IMR-90 (cell line): ENCODE measurements at regions of chr10 and their contacts with region 1.

Region 1: DNA sequence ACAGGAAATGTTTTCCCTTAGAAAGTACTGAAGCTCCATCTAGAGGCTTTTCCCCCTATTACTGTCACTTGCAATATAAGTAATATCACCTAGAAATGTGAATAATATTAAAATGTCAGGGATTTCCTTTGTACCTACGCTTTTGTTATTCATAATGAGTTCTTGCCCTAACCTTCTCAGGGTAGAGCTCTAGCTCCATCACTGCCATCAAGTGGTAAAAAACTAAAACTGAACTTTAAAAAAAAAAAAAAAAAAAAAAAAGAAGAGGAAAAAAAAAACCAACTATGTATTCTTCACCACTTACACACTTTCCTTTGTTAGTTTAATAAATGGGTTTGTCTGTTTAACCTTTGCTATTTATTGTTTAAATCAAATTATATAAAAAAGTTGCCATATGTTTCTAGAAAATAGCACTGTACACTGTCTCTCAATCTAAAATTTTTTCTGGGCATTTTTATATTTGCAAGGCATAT is 49.9 kb downstream of the DNAJC1 start:
- DNase-seq: peak; percentile 61
- ATAC-seq: peak; percentile 14; the same call in 1 of the 2 replicates
- H3K4me3 ChIP-seq: no peak overlapping the region
- H3K27ac ChIP-seq: no peak overlapping the region
- H3K4me1 ChIP-seq: no peaks in the 10 kb centered on the region
- H3K27me3 ChIP-seq: no peaks in the 10 kb centered on the region
- CTCF ChIP-seq: peak; percentile 53
- POLR2A ChIP-seq: no peak
- RAD21 ChIP-seq: peak; percentile 60

Region 2: DNA sequence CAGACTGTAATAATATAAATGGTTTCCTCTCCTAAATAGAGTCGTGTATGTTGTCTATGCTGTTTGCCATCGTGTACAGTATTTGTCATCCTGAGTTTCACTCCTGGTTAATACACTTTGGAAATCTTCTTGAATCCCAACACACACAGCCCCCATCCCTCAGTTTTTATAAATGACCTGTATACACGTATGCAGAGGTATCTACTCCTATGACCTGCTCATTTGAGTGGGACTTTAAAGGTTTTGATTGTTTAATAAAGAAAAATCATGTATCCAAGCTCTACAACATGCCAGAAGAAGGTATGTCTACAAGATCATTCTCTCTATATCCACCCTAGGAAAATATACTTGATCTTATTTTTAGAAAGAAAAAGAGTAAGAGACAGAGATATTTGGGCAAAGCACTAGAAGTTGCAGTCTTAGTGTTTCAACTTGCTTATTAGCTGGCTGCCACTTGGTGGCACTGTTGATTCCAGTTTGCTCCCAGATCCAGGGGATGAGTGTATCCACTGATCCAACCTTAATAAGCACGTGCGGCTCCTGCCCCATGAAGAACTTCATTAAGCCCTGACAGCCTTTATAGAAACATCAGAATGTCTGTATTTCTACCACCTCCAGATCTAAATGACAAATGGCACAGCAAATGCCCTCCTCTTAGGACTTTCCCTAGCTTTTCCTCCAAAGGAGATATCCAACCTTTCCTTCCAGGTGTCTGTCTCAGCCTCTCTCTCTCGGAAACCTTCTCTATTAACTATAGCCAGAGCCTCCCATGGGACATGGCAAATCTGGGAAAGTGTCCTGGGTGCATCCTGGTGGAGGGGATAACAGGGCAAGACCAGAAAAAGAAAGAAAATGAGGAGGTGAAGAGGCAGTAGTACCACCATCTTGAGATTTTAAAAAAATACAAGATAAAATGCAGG is 875.0 kb before region 1 on chr10:
- CTCF ChIA-PET with region 1: no interaction called
- POLR2A ChIA-PET with region 1: no interaction called
- dilution Hi-C with region 1: no loop called
- in situ Hi-C with region 1: loop called (anchors 25 kb)
- intact Hi-C with region 1: loop called (anchors 5 kb)
- DNase-seq: peak; percentile 61
- ATAC-seq: peak; percentile 98
- H3K4me3 ChIP-seq: no peak overlapping the region
- H3K27ac ChIP-seq: no peak overlapping the region
- H3K4me1 ChIP-seq: no peaks in the 10 kb centered on the region
- H3K27me3 ChIP-seq: 0 out of 2 replicates have a peak, but pooled peaks cover 2% of the 10 kb centered on the region
- CTCF ChIP-seq: peak; percentile 73
- POLR2A ChIP-seq: no peak
- RAD21 ChIP-seq: peak; percentile 84

Region 3: GRCh38 chr10:21525367-21526183 is 428.0 kb before region 1 on chr10 and contains the start of gene SKIDA1:
- CTCF ChIA-PET with region 1: no interaction called
- POLR2A ChIA-PET with region 1: no interaction called
- dilution Hi-C with region 1: no loop called
- in situ Hi-C with region 1: no loop called
- intact Hi-C with region 1: loop called (anchors 10 kb)
- DNase-seq: peak; percentile 86
- ATAC-seq: peak; percentile 73
- H3K4me3 ChIP-seq: peak within 1 kb of the TSS; percentile 62
- H3K27ac ChIP-seq: peak within 1 kb of the TSS; percentile 98
- H3K4me1 ChIP-seq: peaks cover 3% of the 10 kb centered on the region; the same call in 1 of the 2 replicates
- H3K27me3 ChIP-seq: no peaks in the 10 kb centered on the region
- CTCF ChIP-seq: no peak
- POLR2A ChIP-seq: no peak
- RAD21 ChIP-seq: no peak
- total RNA-seq, gene SKIDA1: 0.56 and 0.72 TPM in 2 replicates

Region 4: DNA sequence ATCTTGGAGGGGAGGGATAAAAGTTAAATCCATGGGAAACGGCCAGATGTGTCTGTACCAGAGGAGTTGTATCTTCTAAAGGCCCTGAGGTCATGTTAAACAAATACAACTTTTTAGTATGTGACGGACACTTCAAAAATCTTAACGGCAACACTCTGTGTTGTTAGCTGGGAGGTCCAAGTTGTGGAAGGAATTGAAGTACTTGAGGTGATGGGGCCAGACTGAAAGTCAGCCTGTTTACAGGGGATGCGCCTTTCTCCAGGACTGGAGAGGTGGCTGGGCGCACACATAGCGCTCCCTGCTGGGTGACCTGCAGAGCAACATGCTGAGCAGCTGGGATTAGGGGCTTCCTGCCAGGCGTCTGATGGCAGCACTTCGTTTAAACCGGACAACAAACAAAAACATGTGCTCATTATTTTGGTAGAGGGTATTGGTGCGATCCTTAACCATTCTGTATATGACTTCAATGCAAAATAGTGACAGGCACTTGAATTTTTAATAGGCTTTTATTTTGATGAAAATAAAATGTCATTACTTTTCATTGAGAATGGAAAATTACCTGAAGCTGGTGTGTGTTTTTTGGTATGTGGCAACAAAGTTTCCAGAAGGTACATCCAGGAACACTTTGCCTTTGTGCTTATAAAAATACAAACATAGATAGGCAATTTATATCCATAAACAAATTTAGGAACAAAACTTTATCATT is 221.4 kb before region 1 on chr10:
- CTCF ChIA-PET with region 1: interaction called, 4 read pairs
- POLR2A ChIA-PET with region 1: no interaction called
- dilution Hi-C with region 1: no loop called
- in situ Hi-C with region 1: no loop called
- intact Hi-C with region 1: loop called (anchors 5 kb)
- DNase-seq: peak; percentile 82
- ATAC-seq: peak; percentile 95
- H3K4me3 ChIP-seq: no peak overlapping the region
- H3K27ac ChIP-seq: no peak overlapping the region
- H3K4me1 ChIP-seq: peaks cover 4% of the 10 kb centered on the region
- H3K27me3 ChIP-seq: no peaks in the 10 kb centered on the region
- CTCF ChIP-seq: peak; percentile 93
- POLR2A ChIP-seq: no peak
- RAD21 ChIP-seq: peak; percentile 93

Region 5: DNA sequence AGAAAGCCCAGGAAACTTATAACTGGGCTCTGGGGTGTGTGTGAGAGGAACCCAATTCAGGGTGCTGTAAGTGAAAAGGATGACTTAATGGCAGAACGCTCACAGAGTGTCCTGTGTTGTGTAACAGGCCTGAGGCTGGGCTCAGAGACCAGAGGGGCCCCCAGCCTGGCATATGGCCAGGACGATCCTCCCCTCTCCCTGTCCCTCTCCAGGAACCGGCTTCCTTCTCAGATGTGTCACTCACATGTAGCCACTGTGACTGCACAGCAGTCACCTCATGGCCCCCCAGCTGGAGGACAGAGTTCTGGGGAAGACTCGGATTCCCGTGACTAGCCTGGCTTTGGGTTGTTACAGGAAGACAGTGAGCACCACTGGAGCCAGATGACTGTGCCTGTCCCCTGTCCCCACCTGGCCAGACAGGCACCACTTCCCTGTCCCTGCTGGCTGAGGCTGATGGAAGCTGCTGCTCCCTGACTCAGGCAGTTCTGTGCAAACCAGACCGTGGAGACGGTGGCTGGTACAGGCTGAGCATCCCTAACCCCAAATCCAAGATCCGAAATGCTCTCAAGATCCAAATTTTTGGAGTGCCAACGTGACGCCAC is 199.1 kb before region 1 on chr10:
- CTCF ChIA-PET with region 1: no interaction called
- POLR2A ChIA-PET with region 1: no interaction called
- dilution Hi-C with region 1: no loop called
- in situ Hi-C with region 1: no loop called
- intact Hi-C with region 1: loop called (anchors 5 kb)
- DNase-seq: no peak
- ATAC-seq: no peak
- H3K4me3 ChIP-seq: no peak overlapping the region
- H3K27ac ChIP-seq: no peak overlapping the region
- H3K4me1 ChIP-seq: no peaks in the 10 kb centered on the region
- H3K27me3 ChIP-seq: no peaks in the 10 kb centered on the region
- CTCF ChIP-seq: no peak
- POLR2A ChIP-seq: no peak
- RAD21 ChIP-seq: no peak

Region 6: GRCh38 chr10:21926949-21927348 is 26.7 kb before region 1 on chr10:
- CTCF ChIA-PET with region 1: interaction called, 8 read pairs
- POLR2A ChIA-PET with region 1: interaction called, 16 read pairs
- dilution Hi-C with region 1: no loop called
- in situ Hi-C with region 1: no loop called
- intact Hi-C with region 1: no loop called
- DNase-seq: peak; percentile 94
- ATAC-seq: peak; percentile 80
- H3K4me3 ChIP-seq: no peak overlapping the region
- H3K27ac ChIP-seq: no peak overlapping the region
- H3K4me1 ChIP-seq: peaks cover 6% of the 10 kb centered on the region
- H3K27me3 ChIP-seq: no peaks in the 10 kb centered on the region
- CTCF ChIP-seq: no peak
- POLR2A ChIP-seq: no peak
- RAD21 ChIP-seq: no peak

Region 7: GRCh38 chr10:21978191-21978862 is 24.7 kb after region 1 on chr10:
- CTCF ChIA-PET with region 1: no interaction called
- POLR2A ChIA-PET with region 1: no interaction called
- dilution Hi-C with region 1: no loop called
- in situ Hi-C with region 1: no loop called
- intact Hi-C with region 1: no loop called
- DNase-seq: peak; percentile 81
- ATAC-seq: peak; percentile 80
- H3K4me3 ChIP-seq: no peak overlapping the region
- H3K27ac ChIP-seq: no peak overlapping the region
- H3K4me1 ChIP-seq: peaks cover 2% of the 10 kb centered on the region; the same call in 1 of the 2 replicates
- H3K27me3 ChIP-seq: no peaks in the 10 kb centered on the region
- CTCF ChIP-seq: no peak
- POLR2A ChIP-seq: no peak
- RAD21 ChIP-seq: no peak